ENCODE measurements at regions of chr2 and their contacts with region 1.

Region 1: GRCh38 chr2:229445019-229445418 is 173.9 kb upstream of the PID1 start:
- DNase-seq: peak; percentile 74 to 93
- H3K4me3 ChIP-seq: peak overlapping the region in 1 of 2 donors; percentile 40
- H3K27ac ChIP-seq: peak overlapping the region; percentile 97 to 98
- H3K4me1 ChIP-seq: peaks cover 8 to 35% of the 10 kb centered on the region in 2 donors
- H3K27me3 ChIP-seq: no peaks in the 10 kb centered on the region
- CTCF ChIP-seq: peak; percentile 6 to 32 (median 28)

Region 2: GRCh38 chr2:229133155-229133772 is 311.8 kb before region 1 on chr2:
- intact Hi-C with region 1: loop called (anchors 10 kb)
- DNase-seq: no peak
- H3K4me3 ChIP-seq: no peak overlapping the region
- H3K27ac ChIP-seq: no peak overlapping the region
- H3K4me1 ChIP-seq: peaks cover 0 to 15% of the 10 kb centered on the region in 2 donors
- H3K27me3 ChIP-seq: no peaks in the 10 kb centered on the region
- CTCF ChIP-seq: peak; percentile 46 to 62 (median 51)

Region 3: GRCh38 chr2:229174794-229175496 is 270.1 kb before region 1 on chr2:
- intact Hi-C with region 1: loop called (anchors 10 kb)
- DNase-seq: no peak
- H3K4me3 ChIP-seq: no peak overlapping the region
- H3K27ac ChIP-seq: peak overlapping the region; percentile 28 to 71
- H3K4me1 ChIP-seq: peaks cover 3 to 26% of the 10 kb centered on the region in 2 donors
- H3K27me3 ChIP-seq: no peaks in the 10 kb centered on the region
- CTCF ChIP-seq: no peak

Region 4: GRCh38 chr2:229407170-229407569 is 37.8 kb before region 1 on chr2:
- intact Hi-C with region 1: loop called (anchors 2 kb)
- DNase-seq: peak; percentile 74 to 88
- H3K4me3 ChIP-seq: peak overlapping the region in 1 of 2 donors; percentile 14
- H3K27ac ChIP-seq: peak overlapping the region; percentile 90
- H3K4me1 ChIP-seq: peaks cover 15 to 44% of the 10 kb centered on the region in 2 donors
- H3K27me3 ChIP-seq: no peaks in the 10 kb centered on the region
- CTCF ChIP-seq: no peak

Region 5: DNA sequence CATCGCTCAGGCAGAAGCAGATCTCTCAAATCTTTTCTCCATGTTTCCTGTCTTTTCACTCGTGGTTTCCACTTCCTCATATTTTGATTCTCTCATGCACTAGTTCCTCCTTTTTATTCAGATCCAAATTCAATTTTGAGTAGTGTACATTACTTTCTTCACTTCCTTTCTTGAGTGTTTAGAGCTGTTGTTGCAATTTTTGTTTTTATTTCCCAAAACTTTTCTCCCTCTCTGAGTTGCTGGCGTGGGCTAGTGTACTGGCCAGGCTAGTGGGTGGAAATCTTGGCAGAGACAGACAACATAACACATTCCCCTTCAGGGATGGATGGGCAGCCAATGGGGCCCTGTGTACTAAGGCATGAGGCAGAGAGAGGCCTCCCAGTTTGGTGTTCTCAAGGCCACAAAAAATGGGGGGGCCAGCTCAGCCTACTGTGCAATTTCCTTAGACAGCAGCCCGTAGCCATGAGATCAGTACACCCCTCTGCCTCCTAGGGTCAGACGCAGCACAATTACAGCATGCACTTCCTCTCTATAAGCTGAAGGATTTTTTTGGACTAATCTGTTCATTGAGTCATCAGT is 28.8 kb before region 1 on chr2:
- intact Hi-C with region 1: loop called (anchors 2 kb)
- DNase-seq: peak; percentile 39 to 92
- H3K4me3 ChIP-seq: no peak overlapping the region
- H3K27ac ChIP-seq: peak overlapping the region; percentile 90
- H3K4me1 ChIP-seq: peaks cover 17 to 60% of the 10 kb centered on the region in 2 donors
- H3K27me3 ChIP-seq: no peaks in the 10 kb centered on the region
- CTCF ChIP-seq: no peak

Region 6: GRCh38 chr2:229695946-229696345 is 250.9 kb after region 1 on chr2:
- intact Hi-C with region 1: no loop called
- DNase-seq: no peak
- H3K4me3 ChIP-seq: no peak overlapping the region
- H3K27ac ChIP-seq: no peak overlapping the region
- H3K4me1 ChIP-seq: no peaks in the 10 kb centered on the region
- H3K27me3 ChIP-seq: no peaks in the 10 kb centered on the region
- CTCF ChIP-seq: no peak